Left lung (tissue), 14 donors: ENCODE measurements at regions of chr16 and their contacts with region 1.

Region 1: DNA sequence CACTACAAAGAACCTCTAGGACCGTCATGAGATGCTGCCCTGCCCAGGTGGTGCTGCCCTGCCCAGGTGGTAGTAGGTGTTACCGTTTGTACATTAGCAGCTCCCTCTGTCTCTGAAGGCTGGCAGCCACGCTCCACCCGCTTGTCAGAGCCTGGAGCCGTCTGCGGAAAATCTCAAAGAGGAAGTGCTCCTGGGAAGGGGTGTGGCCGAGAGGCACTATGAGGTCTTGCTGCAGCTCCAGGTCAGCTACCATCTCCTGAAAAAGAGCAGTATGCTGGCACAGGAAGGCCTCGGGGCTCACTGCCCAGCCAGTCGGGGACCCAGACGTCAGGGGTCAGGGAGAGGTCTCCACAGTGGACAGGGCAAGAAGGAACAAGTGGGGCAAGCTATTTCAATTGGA is 28.3 kb downstream of the ZNF276 start:
- DNase-seq: peak in 2 of 4 donors; percentile 65 to 83
- ATAC-seq: peak; percentile 82
- H3K4me3 ChIP-seq: no peak overlapping the region
- H3K27ac ChIP-seq: peak overlapping the region in 1 of 2 donors; percentile 55
- H3K4me1 ChIP-seq: peaks cover 0 to 12% of the 10 kb centered on the region in 2 donors
- H3K27me3 ChIP-seq: no peaks in the 10 kb centered on the region
- CTCF ChIP-seq: no peak

Region 2: DNA sequence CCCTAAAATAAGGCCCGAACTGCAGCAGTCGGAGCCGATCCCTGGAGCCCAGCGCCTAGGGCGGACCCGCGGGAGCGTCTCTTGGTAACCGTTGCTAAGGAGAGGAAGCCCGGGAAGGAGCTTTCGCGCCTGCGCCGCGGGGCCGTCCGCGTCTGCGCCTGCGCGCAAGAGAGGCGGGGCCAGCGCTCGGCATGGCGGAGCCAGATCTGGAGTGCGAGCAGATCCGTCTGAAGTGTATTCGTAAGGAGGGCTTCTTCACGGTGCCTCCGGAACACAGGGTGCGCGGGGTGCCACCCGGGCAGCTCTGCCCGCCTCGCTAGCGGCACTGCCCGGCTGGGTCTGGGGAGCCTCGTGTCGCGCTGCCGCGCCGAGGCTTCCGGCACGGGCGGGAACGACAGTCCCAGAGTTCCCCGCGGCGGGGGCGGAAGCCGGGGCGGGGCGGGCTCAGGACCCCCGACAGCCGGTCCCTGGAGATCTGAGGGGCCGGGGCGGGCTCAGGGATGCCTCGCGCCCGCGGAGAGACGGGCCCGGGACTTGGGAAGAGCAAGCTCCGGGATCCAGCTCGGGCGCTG is 63.0 kb before region 1 on chr16 and contains the start of gene CDK10:
- intact Hi-C with region 1: loop called in 1 of 2 experiments (anchors 10 kb)
- DNase-seq: peak; percentile 89 to 97 (median 95)
- ATAC-seq: peak; percentile 92
- H3K4me3 ChIP-seq: peak within 1 kb of the TSS; percentile 71 to 97
- H3K27ac ChIP-seq: peak within 1 kb of the TSS; percentile 80 to 82
- H3K4me1 ChIP-seq: peaks cover 8 to 13% of the 10 kb centered on the region in 2 donors
- H3K27me3 ChIP-seq: no peaks in the 10 kb centered on the region
- CTCF ChIP-seq: no peak
- polyA plus RNA-seq, gene CDK10: 78.3 to 160 (median 110) TPM

Region 3: GRCh38 chr16:89815639-89816348 is 66.1 kb after region 1 on chr16:
- intact Hi-C with region 1: no loop called
- DNase-seq: peak in 1 of 4 donors; percentile 81
- ATAC-seq: no peak
- H3K4me3 ChIP-seq: peak overlapping the region; percentile 52 to 83
- H3K27ac ChIP-seq: no peak overlapping the region
- H3K4me1 ChIP-seq: peaks cover 11 to 30% of the 10 kb centered on the region in 2 donors
- H3K27me3 ChIP-seq: no peaks in the 10 kb centered on the region
- CTCF ChIP-seq: no peak

Region 4: GRCh38 chr16:89860747-89861304 is 111.2 kb after region 1 on chr16:
- intact Hi-C with region 1: loop called in 1 of 2 experiments (anchors 10 kb)
- DNase-seq: peak in 3 of 4 donors; percentile 60 to 93 (median 67)
- ATAC-seq: peak; percentile 91
- H3K4me3 ChIP-seq: no peak overlapping the region
- H3K27ac ChIP-seq: no peak overlapping the region
- H3K4me1 ChIP-seq: peaks cover 11 to 30% of the 10 kb centered on the region in 2 donors
- H3K27me3 ChIP-seq: no peaks in the 10 kb centered on the region
- CTCF ChIP-seq: peak; percentile 95